Activated naive CD4-positive, alpha-beta T cell treated with anti-CD3 and anti-CD28 coated beads for 36 hours (primary cell): ENCODE measurements at regions of chr6 and their contacts with region 1.

Region 1: GRCh38 chr6:56890683-56891429 is 64.1 kb upstream of the BEND6 start:
- DNase-seq: peak; percentile 60
- H3K4me3 Mint-ChIP-seq: no peak overlapping the region
- H3K27ac Mint-ChIP-seq: no peak overlapping the region
- H3K4me1 Mint-ChIP-seq: peaks cover 29% of the 10 kb centered on the region
- H3K27me3 Mint-ChIP-seq: no peaks in the 10 kb centered on the region

Region 2: GRCh38 chr6:56851541-56852259 is 39.2 kb before region 1 on chr6:
- CTCF ChIA-PET with region 1: interaction called, 3 read pairs
- intact Hi-C with region 1: loop called (anchors 2 kb)
- DNase-seq: peak; percentile 43
- H3K4me3 Mint-ChIP-seq: peak overlapping the region; percentile 67
- H3K27ac Mint-ChIP-seq: no peak overlapping the region
- H3K4me1 Mint-ChIP-seq: peaks cover 21% of the 10 kb centered on the region
- H3K27me3 Mint-ChIP-seq: peaks cover 38% of the 10 kb centered on the region

Region 3: GRCh38 chr6:56902641-56903464 is 12.0 kb after region 1 on chr6:
- CTCF ChIA-PET with region 1: interaction called, 14 read pairs
- intact Hi-C with region 1: no loop called
- DNase-seq: no peak
- H3K4me3 Mint-ChIP-seq: no peak overlapping the region
- H3K27ac Mint-ChIP-seq: no peak overlapping the region
- H3K4me1 Mint-ChIP-seq: peaks cover 2% of the 10 kb centered on the region
- H3K27me3 Mint-ChIP-seq: peaks cover 5% of the 10 kb centered on the region